ENCODE measurements at regions of chr2 and their contacts with region 1.

Region 1: GRCh38 chr2:125745514-125745913 is 910.4 kb upstream of the GYPC start:
- DNase-seq: peak; percentile 37
- H3K4me3 ChIP-seq: no peak overlapping the region
- H3K27ac ChIP-seq: no peak overlapping the region
- H3K4me1 ChIP-seq: no peaks in the 10 kb centered on the region
- H3K27me3 ChIP-seq: no peaks in the 10 kb centered on the region
- CTCF ChIP-seq: peak in 4 of 5 experiments; percentile 44 to 56 (median 49)
- EP300 ChIP-seq: no peak
- POLR2A ChIP-seq: no peak

Region 2: DNA sequence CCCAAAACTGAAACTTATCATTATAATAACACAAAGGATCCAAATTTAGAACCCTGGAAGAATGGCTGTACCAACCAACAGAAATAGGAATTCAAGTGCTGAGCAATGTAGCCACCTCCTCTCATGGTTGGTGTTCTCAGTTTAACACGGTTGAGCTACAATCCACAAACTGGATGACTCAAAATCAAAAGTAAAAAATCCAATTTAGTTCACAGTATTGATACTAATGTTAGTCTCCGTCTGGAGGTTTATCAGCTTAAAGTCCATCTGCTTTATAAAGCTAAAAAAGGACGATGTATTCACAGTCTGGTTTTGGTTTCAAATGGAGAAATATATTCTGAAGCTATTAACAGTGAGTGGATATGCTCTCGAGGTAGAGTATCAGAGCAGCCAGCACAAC is 1679.9 kb before region 1 on chr2:
- in situ Hi-C with region 1: no loop called
- intact Hi-C with region 1: loop called (anchors 10 kb)
- DNase-seq: no peak
- H3K4me3 ChIP-seq: no peak overlapping the region
- H3K27ac ChIP-seq: no peak overlapping the region
- H3K4me1 ChIP-seq: no peaks in the 10 kb centered on the region
- H3K27me3 ChIP-seq: no peaks in the 10 kb centered on the region
- CTCF ChIP-seq: no peak
- EP300 ChIP-seq: no peak
- POLR2A ChIP-seq: no peak

Measured in transverse colon (tissue), 4 donors.